H1 (cell line): ENCODE measurements at regions of chr17 and their contacts with region 1.

Region 1: GRCh38 chr17:1399679-1400512 is at the start of gene YWHAE:
- DNase-seq: peak; percentile 84 to 97
- H3K4me3 ChIP-seq: peak within 1 kb of the TSS; percentile 74 to 100 (median 97)
- H3K27ac ChIP-seq: peak within 1 kb of the TSS; percentile 98
- H3K4me1 ChIP-seq: peaks cover 0 to 5% (median 2%) of the 10 kb centered on the region in 4 experiments; a peak in 5 of 7 replicates
- H3K27me3 ChIP-seq: no peaks in the 10 kb centered on the region; a peak in 1 of 7 replicates
- CTCF ChIP-seq: no peak
- EP300 ChIP-seq: peak in 1 of 2 experiments; percentile 65; a peak in 1 of 3 replicates
- POLR2A ChIP-seq: peak; percentile 91 to 97
- RAD21 ChIP-seq: no peak
- total RNA-seq, gene YWHAE: 1,186 and 1,198 TPM in 2 replicates

Region 2: GRCh38 chr17:1340371-1340770 is 59.5 kb before region 1 on chr17:
- CTCF ChIA-PET with region 1: interaction called, 3 read pairs
- POLR2A ChIA-PET with region 1: interaction called, 10 read pairs
- DNase-seq: no peak
- H3K4me3 ChIP-seq: no peak overlapping the region
- H3K27ac ChIP-seq: no peak overlapping the region
- H3K4me1 ChIP-seq: peaks cover 0 to 3% (median 0%) of the 10 kb centered on the region in 4 experiments; a peak in 1 of 7 replicates
- H3K27me3 ChIP-seq: no peaks in the 10 kb centered on the region
- CTCF ChIP-seq: no peak
- EP300 ChIP-seq: no peak
- POLR2A ChIP-seq: no peak
- RAD21 ChIP-seq: no peak

Region 3: DNA sequence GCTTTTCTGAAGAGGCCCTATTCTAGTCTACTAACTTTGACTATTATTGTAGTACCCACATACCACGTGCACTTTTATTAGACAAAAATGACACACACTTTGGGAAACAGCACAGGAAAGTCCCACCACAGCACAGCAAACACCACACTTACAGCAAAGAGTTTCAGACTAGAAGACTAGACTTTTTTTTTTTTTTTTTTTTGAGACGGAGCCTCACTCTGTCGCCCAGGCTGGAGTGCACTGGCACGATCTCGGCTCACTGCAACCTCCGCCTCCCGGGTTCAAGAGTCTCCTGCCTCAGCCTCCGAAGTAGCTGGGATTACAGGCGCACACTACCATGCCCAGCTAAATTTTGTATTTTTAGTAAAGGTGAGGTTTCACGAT is 20.0 kb before region 1 on chr17:
- CTCF ChIA-PET with region 1: interaction called, 3 read pairs
- POLR2A ChIA-PET with region 1: interaction called, 82 read pairs
- DNase-seq: no peak
- H3K4me3 ChIP-seq: no peak overlapping the region
- H3K27ac ChIP-seq: no peak overlapping the region
- H3K4me1 ChIP-seq: peaks cover 0 to 3% (median 1%) of the 10 kb centered on the region in 4 experiments; a peak in 2 of 7 replicates
- H3K27me3 ChIP-seq: no peaks in the 10 kb centered on the region
- CTCF ChIP-seq: no peak
- EP300 ChIP-seq: no peak
- POLR2A ChIP-seq: no peak
- RAD21 ChIP-seq: no peak

Region 4: GRCh38 chr17:1413281-1413791 is 13.4 kb after region 1 on chr17:
- CTCF ChIA-PET with region 1: interaction called, 6 read pairs
- POLR2A ChIA-PET with region 1: interaction called, 19 read pairs
- DNase-seq: no peak
- H3K4me3 ChIP-seq: no peak overlapping the region
- H3K27ac ChIP-seq: no peak overlapping the region
- H3K4me1 ChIP-seq: no peaks in the 10 kb centered on the region
- H3K27me3 ChIP-seq: no peaks in the 10 kb centered on the region
- CTCF ChIP-seq: no peak
- EP300 ChIP-seq: no peak
- POLR2A ChIP-seq: no peak
- RAD21 ChIP-seq: no peak

Region 5: DNA sequence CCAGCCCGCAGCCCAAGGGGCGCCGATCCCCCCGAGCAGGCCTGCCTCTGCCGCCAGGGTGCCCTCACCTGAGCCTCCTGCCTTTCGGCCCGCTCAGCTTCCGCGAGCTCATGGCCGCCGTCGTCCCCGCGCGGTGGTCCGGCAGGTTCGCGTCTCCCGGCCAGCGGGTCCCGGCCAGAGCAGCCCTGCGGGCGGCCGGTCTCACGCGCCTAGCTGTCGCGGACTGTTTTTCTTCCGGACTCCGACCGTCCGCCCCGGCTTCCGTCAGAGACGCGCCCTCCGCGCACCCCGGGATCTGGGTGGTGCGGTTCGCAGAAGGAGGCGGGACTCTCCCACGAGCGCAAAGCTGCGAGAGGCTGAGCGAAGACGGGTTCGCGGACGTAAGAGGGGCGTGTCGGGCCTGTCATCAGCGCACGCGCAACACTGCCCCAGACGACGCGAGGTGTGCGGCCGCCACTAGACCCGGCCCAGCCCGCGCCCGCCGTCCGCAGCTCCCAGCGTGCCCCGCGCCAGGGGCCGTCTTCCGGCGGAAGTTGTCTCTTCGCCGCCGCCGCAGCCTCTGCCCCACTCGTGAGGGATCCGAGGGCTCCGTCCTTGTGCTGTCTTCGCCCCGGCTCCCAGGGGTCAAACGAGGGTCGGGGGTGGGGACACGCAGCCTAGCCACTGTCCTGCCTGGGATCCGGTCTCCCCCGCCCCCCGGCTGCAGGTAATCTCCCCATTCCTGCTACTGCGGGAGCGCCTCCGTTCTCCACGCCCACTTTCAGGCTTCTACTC is 116.7 kb after region 1 on chr17 and contains the start of gene INPP5K:
- CTCF ChIA-PET with region 1: no interaction called
- POLR2A ChIA-PET with region 1: interaction called, 10 read pairs
- DNase-seq: peak; percentile 89 to 91
- H3K4me3 ChIP-seq: peak within 1 kb of the TSS; percentile 85 to 92 (median 90)
- H3K27ac ChIP-seq: peak within 1 kb of the TSS; percentile 75
- H3K4me1 ChIP-seq: peaks cover 0 to 6% (median 3%) of the 10 kb centered on the region in 4 experiments; a peak in 5 of 7 replicates
- H3K27me3 ChIP-seq: no peaks in the 10 kb centered on the region
- CTCF ChIP-seq: no peak
- EP300 ChIP-seq: peak in 1 of 2 experiments; percentile 2; a peak in 1 of 3 replicates
- POLR2A ChIP-seq: peak in 1 of 2 experiments; percentile 81; a peak in 2 of 3 replicates
- RAD21 ChIP-seq: no peak
- total RNA-seq, gene INPP5K: 20.4 and 21.0 TPM in 2 replicates